Naive thymus-derived CD4-positive, alpha-beta T cell (primary cell): ENCODE measurements at regions of chr12 and their contacts with region 1.

Region 1: GRCh38 chr12:89244536-89244935 is 107.8 kb downstream of the DUSP6 start:
- DNase-seq: peak in 7 of 9 donors; percentile 28 to 67 (median 56)
- ATAC-seq: peak; percentile 76
- H3K4me3 ChIP-seq: peak overlapping the region; percentile 23
- H3K4me3 Mint-ChIP-seq: peak overlapping the region; percentile 18 to 64 (median 52)
- H3K27ac ChIP-seq: no peak overlapping the region
- H3K27ac Mint-ChIP-seq: peak overlapping the region; percentile 2 to 93 (median 60)
- H3K4me1 ChIP-seq: peaks cover 24 to 28% of the 10 kb centered on the region in 2 donors
- H3K4me1 Mint-ChIP-seq: peaks cover 32 to 56% (median 48%) of the 10 kb centered on the region in 7 donors
- H3K27me3 ChIP-seq: no peaks in the 10 kb centered on the region
- H3K27me3 Mint-ChIP-seq: no peaks in the 10 kb centered on the region

Region 2: GRCh38 chr12:89051065-89051677 is 193.4 kb before region 1 on chr12:
- CTCF ChIA-PET with region 1: interaction called, 4 read pairs
- POLR2A ChIA-PET with region 1: no interaction called
- intact Hi-C with region 1: loop called (anchors 1 kb)
- DNase-seq: peak in 7 of 9 donors; percentile 28 to 63 (median 51)
- ATAC-seq: peak; percentile 70
- H3K4me3 ChIP-seq: no peak overlapping the region
- H3K4me3 Mint-ChIP-seq: no peak overlapping the region
- H3K27ac ChIP-seq: no peak overlapping the region
- H3K27ac Mint-ChIP-seq: peak overlapping the region in 1 of 9 donors; percentile 34
- H3K4me1 ChIP-seq: no peaks in the 10 kb centered on the region
- H3K4me1 Mint-ChIP-seq: peaks cover 0 to 30% (median 0%) of the 10 kb centered on the region in 7 donors
- H3K27me3 ChIP-seq: no peaks in the 10 kb centered on the region
- H3K27me3 Mint-ChIP-seq: no peaks in the 10 kb centered on the region

Region 3: GRCh38 chr12:89179983-89180382 is 64.6 kb before region 1 on chr12:
- CTCF ChIA-PET with region 1: no interaction called
- POLR2A ChIA-PET with region 1: no interaction called
- intact Hi-C with region 1: loop called in 1 of 2 experiments (anchors 2 kb)
- DNase-seq: no peak
- ATAC-seq: peak; percentile 36
- H3K4me3 ChIP-seq: no peak overlapping the region
- H3K4me3 Mint-ChIP-seq: peak overlapping the region in 1 of 10 donors; percentile 47
- H3K27ac ChIP-seq: no peak overlapping the region
- H3K27ac Mint-ChIP-seq: peak overlapping the region in 1 of 9 donors; percentile 77
- H3K4me1 ChIP-seq: peaks cover 0 to 5% of the 10 kb centered on the region in 2 donors
- H3K4me1 Mint-ChIP-seq: peaks cover 6 to 46% (median 14%) of the 10 kb centered on the region in 7 donors
- H3K27me3 ChIP-seq: no peaks in the 10 kb centered on the region
- H3K27me3 Mint-ChIP-seq: no peaks in the 10 kb centered on the region

Region 4: DNA sequence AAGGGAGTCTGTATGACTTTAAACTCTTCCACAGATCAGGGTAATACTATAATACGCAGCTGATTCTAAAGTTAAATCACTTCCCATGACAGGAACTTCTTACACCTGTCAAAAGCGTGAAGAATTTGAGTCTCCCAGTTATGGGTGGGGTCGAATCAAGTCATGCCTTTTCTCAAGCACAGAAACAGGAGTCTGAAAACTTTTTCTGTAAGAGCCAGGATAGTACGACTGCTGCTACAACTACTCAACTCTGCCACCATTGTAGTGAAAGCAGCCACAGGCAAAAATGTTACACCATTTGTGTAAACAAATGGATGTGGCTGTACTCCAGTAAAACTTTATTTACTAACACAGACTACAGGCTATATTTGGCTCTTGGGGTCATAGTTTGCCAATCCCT is 17.4 kb after region 1 on chr12:
- CTCF ChIA-PET with region 1: interaction called, 3 read pairs
- POLR2A ChIA-PET with region 1: no interaction called
- intact Hi-C with region 1: loop called in 1 of 2 experiments (anchors 2 kb)
- DNase-seq: no peak
- ATAC-seq: no peak
- H3K4me3 ChIP-seq: no peak overlapping the region
- H3K4me3 Mint-ChIP-seq: no peak overlapping the region
- H3K27ac ChIP-seq: no peak overlapping the region
- H3K27ac Mint-ChIP-seq: no peak overlapping the region
- H3K4me1 ChIP-seq: no peaks in the 10 kb centered on the region
- H3K4me1 Mint-ChIP-seq: peaks cover 0 to 31% (median 4%) of the 10 kb centered on the region in 7 donors
- H3K27me3 ChIP-seq: no peaks in the 10 kb centered on the region
- H3K27me3 Mint-ChIP-seq: no peaks in the 10 kb centered on the region

Region 5: GRCh38 chr12:89319122-89319521 is 74.6 kb after region 1 on chr12:
- CTCF ChIA-PET with region 1: no interaction called
- POLR2A ChIA-PET with region 1: no interaction called
- intact Hi-C with region 1: no loop called
- DNase-seq: no peak
- ATAC-seq: no peak
- H3K4me3 ChIP-seq: no peak overlapping the region
- H3K4me3 Mint-ChIP-seq: no peak overlapping the region
- H3K27ac ChIP-seq: no peak overlapping the region
- H3K27ac Mint-ChIP-seq: no peak overlapping the region
- H3K4me1 ChIP-seq: no peaks in the 10 kb centered on the region
- H3K4me1 Mint-ChIP-seq: peaks cover 0 to 23% (median 6%) of the 10 kb centered on the region in 7 donors
- H3K27me3 ChIP-seq: no peaks in the 10 kb centered on the region
- H3K27me3 Mint-ChIP-seq: no peaks in the 10 kb centered on the region

Region 6: GRCh38 chr12:89345830-89346740 is 101.5 kb after region 1 on chr12:
- CTCF ChIA-PET with region 1: no interaction called
- POLR2A ChIA-PET with region 1: no interaction called
- intact Hi-C with region 1: loop called in 1 of 2 experiments (anchors 1 kb)
- DNase-seq: peak in 2 of 9 donors; percentile 7 to 27
- ATAC-seq: peak; percentile 79
- H3K4me3 ChIP-seq: peak overlapping the region; percentile 4
- H3K4me3 Mint-ChIP-seq: peak overlapping the region in 9 of 10 donors; percentile 1 to 98 (median 38)
- H3K27ac ChIP-seq: no peak overlapping the region
- H3K27ac Mint-ChIP-seq: peak overlapping the region in 2 of 9 donors; percentile 53 to 83
- H3K4me1 ChIP-seq: peaks cover 26 to 42% of the 10 kb centered on the region in 2 donors
- H3K4me1 Mint-ChIP-seq: peaks cover 21 to 71% (median 37%) of the 10 kb centered on the region in 7 donors
- H3K27me3 ChIP-seq: no peaks in the 10 kb centered on the region
- H3K27me3 Mint-ChIP-seq: no peaks in the 10 kb centered on the region

Region 7: GRCh38 chr12:89470741-89471509 is 226.4 kb after region 1 on chr12:
- CTCF ChIA-PET with region 1: no interaction called
- POLR2A ChIA-PET with region 1: no interaction called
- intact Hi-C with region 1: loop called (anchors 2 kb)
- DNase-seq: peak in 6 of 9 donors; percentile 28 to 56 (median 46)
- ATAC-seq: peak; percentile 86
- H3K4me3 ChIP-seq: no peak overlapping the region
- H3K4me3 Mint-ChIP-seq: peak overlapping the region in 1 of 10 donors; percentile 35
- H3K27ac ChIP-seq: no peak overlapping the region
- H3K27ac Mint-ChIP-seq: peak overlapping the region in 5 of 9 donors; percentile 12 to 85 (median 48)
- H3K4me1 ChIP-seq: peaks cover 23 to 31% of the 10 kb centered on the region in 2 donors
- H3K4me1 Mint-ChIP-seq: peaks cover 26 to 63% (median 44%) of the 10 kb centered on the region in 7 donors
- H3K27me3 ChIP-seq: no peaks in the 10 kb centered on the region
- H3K27me3 Mint-ChIP-seq: no peaks in the 10 kb centered on the region

Region 8: DNA sequence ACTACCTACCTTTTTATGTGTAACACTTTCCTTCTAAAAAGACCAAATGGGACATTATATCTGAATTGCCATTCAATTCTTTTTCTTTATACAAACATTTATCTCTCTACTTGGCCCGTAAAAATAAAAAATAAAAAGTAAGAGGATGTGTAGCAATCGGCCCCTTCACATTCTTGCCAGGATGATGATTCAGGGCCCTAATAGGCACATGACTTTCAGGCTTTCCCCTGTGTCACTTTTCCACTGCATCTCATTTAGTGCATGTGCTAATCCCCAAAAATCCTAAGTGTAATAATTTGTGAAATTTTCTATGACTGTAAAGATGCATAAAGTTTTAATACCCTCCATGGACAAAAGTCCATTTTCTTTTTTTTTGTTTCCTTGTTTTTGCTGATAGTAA is 487.1 kb after region 1 on chr12:
- CTCF ChIA-PET with region 1: no interaction called
- POLR2A ChIA-PET with region 1: no interaction called
- intact Hi-C with region 1: no loop called
- DNase-seq: no peak
- ATAC-seq: peak; percentile 55
- H3K4me3 ChIP-seq: no peak overlapping the region
- H3K4me3 Mint-ChIP-seq: no peak overlapping the region
- H3K27ac ChIP-seq: no peak overlapping the region
- H3K27ac Mint-ChIP-seq: no peak overlapping the region
- H3K4me1 ChIP-seq: peaks cover 3 to 4% of the 10 kb centered on the region in 2 donors
- H3K4me1 Mint-ChIP-seq: peaks cover 0 to 10% (median 7%) of the 10 kb centered on the region in 7 donors
- H3K27me3 ChIP-seq: no peaks in the 10 kb centered on the region
- H3K27me3 Mint-ChIP-seq: peaks cover 0 to 12% (median 0%) of the 10 kb centered on the region in 5 donors

Region 9: DNA sequence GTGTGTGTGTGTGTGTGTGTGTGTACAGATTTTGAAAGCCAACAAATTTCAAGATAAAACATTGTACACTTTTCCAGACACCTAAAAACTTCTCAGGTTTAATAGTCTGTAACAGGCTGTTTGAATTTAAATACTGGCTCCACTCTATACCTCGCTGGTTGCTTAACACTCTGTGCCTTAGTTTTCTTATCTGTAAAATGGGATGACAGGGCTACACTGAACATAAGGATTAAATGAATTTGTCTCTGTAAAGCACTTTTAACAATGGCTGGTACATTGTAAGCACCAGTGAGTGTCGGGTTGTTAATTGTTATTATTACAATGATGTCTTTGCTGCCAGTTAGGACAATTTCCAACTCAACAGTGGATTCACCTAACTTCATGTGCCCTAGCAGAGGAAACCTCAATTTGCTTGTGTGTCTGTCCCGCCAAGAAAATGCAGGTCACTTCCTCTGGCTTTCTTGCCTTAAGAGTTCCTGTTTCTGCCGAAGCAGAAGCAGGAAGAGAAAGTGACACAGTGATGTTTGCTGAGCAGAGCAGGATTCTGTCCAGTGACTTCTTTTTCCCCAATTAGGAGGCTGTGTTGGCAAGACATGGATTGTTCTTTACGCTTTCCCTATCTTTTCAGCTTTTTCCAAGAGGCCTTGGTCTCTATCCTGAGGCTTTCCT is 618.1 kb after region 1 on chr12:
- CTCF ChIA-PET with region 1: no interaction called
- POLR2A ChIA-PET with region 1: no interaction called
- intact Hi-C with region 1: loop called in 1 of 2 experiments (anchors 10 kb)
- DNase-seq: peak in 7 of 9 donors; percentile 46 to 66 (median 57)
- ATAC-seq: peak; percentile 49
- H3K4me3 ChIP-seq: peak overlapping the region; percentile 44
- H3K4me3 Mint-ChIP-seq: peak overlapping the region; percentile 78 to 86 (median 82)
- H3K27ac ChIP-seq: peak overlapping the region; percentile 87
- H3K27ac Mint-ChIP-seq: peak overlapping the region; percentile 96 to 99 (median 98)
- H3K4me1 ChIP-seq: peaks cover 23 to 30% of the 10 kb centered on the region in 2 donors
- H3K4me1 Mint-ChIP-seq: peaks cover 40 to 72% (median 53%) of the 10 kb centered on the region in 7 donors
- H3K27me3 ChIP-seq: no peaks in the 10 kb centered on the region
- H3K27me3 Mint-ChIP-seq: no peaks in the 10 kb centered on the region